ENCODE measurements at regions of chr1 and their contacts with region 1.

Region 1: GRCh38 chr1:94532077-94532476 is 9.5 kb downstream of the F3 start:
- DNase-seq: no peak
- H3K4me3 ChIP-seq: no peak overlapping the region
- H3K27ac ChIP-seq: no peak overlapping the region
- H3K4me1 ChIP-seq: peaks cover 10% of the 10 kb centered on the region
- H3K27me3 ChIP-seq: no peaks in the 10 kb centered on the region
- CTCF ChIP-seq: no peak
- POLR2A ChIP-seq: no peak

Region 2: GRCh38 chr1:94396356-94397010 is 135.6 kb before region 1 on chr1:
- intact Hi-C with region 1: loop called (anchors 5 kb)
- DNase-seq: no peak
- H3K4me3 ChIP-seq: no peak overlapping the region
- H3K27ac ChIP-seq: no peak overlapping the region
- H3K4me1 ChIP-seq: no peaks in the 10 kb centered on the region
- H3K27me3 ChIP-seq: no peaks in the 10 kb centered on the region
- CTCF ChIP-seq: no peak
- POLR2A ChIP-seq: no peak

Region 3: DNA sequence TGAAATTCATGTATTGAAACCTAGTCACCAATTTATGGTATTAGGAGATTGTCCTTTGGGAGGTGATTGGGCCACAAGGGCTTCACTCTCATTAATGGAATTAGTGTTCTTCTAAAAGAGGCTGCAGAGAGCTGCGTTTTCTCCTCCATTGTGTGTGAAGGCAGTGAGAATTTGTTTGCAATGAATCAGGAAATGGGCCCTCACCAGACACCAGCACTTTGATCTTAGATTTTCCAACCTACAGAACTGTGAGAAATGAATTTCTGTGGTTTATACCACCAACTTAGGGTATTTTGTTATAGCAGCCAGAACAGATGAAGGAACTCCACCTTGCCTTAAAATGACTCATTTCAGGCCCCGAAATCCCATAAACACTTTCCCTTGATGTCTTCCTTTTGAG is 1246.1 kb after region 1 on chr1:
- intact Hi-C with region 1: no loop called
- DNase-seq: no peak
- H3K4me3 ChIP-seq: no peak overlapping the region
- H3K27ac ChIP-seq: no peak overlapping the region
- H3K4me1 ChIP-seq: no peaks in the 10 kb centered on the region
- H3K27me3 ChIP-seq: no peaks in the 10 kb centered on the region
- CTCF ChIP-seq: no peak
- POLR2A ChIP-seq: no peak

Measured in vagina (tissue), 2 donors.